ENCODE measurements at regions of chr3 and their contacts with region 1.

Region 1: GRCh38 chr3:177426878-177427495 is 229.7 kb upstream of the TBL1XR1 start:
- DNase-seq: peak; percentile 83
- H3K4me3 Mint-ChIP-seq: peak overlapping the region; percentile 55
- H3K27ac Mint-ChIP-seq: peak overlapping the region; percentile 91
- H3K4me1 Mint-ChIP-seq: peaks cover 42% of the 10 kb centered on the region
- H3K27me3 Mint-ChIP-seq: peaks cover 7% of the 10 kb centered on the region

Region 2: GRCh38 chr3:177197041-177197727 is 229.8 kb before region 1 on chr3 and contains the start of gene TBL1XR1:
- CTCF ChIA-PET with region 1: no interaction called
- POLR2A ChIA-PET with region 1: interaction called, 3 read pairs
- intact Hi-C with region 1: loop called (anchors 1 kb)
- DNase-seq: peak; percentile 89
- H3K4me3 Mint-ChIP-seq: peak within 1 kb of the TSS; percentile 90
- H3K27ac Mint-ChIP-seq: peak within 1 kb of the TSS; percentile 99
- H3K4me1 Mint-ChIP-seq: peaks cover 51% of the 10 kb centered on the region
- H3K27me3 Mint-ChIP-seq: no peaks in the 10 kb centered on the region
- total RNA-seq, gene TBL1XR1: 158 to 167 TPM

Region 3: GRCh38 chr3:177345049-177345972 is 81.7 kb before region 1 on chr3:
- CTCF ChIA-PET with region 1: no interaction called
- POLR2A ChIA-PET with region 1: interaction called, 4 read pairs
- intact Hi-C with region 1: loop called (anchors 1 kb)
- DNase-seq: peak; percentile 86
- H3K4me3 Mint-ChIP-seq: peak overlapping the region; percentile 20
- H3K27ac Mint-ChIP-seq: peak overlapping the region; percentile 90
- H3K4me1 Mint-ChIP-seq: peaks cover 40% of the 10 kb centered on the region
- H3K27me3 Mint-ChIP-seq: no peaks in the 10 kb centered on the region

Region 4: GRCh38 chr3:177538750-177539730 is 112.1 kb after region 1 on chr3:
- CTCF ChIA-PET with region 1: no interaction called
- POLR2A ChIA-PET with region 1: no interaction called
- intact Hi-C with region 1: loop called (anchors 5 kb)
- DNase-seq: no peak
- H3K4me3 Mint-ChIP-seq: peak overlapping the region; percentile 42
- H3K27ac Mint-ChIP-seq: peak overlapping the region; percentile 67
- H3K4me1 Mint-ChIP-seq: peaks cover 40% of the 10 kb centered on the region
- H3K27me3 Mint-ChIP-seq: no peaks in the 10 kb centered on the region

Region 5: GRCh38 chr3:177787279-177788041 is 360.5 kb after region 1 on chr3:
- CTCF ChIA-PET with region 1: no interaction called
- POLR2A ChIA-PET with region 1: no interaction called
- intact Hi-C with region 1: loop called (anchors 1 kb)
- DNase-seq: no peak
- H3K4me3 Mint-ChIP-seq: no peak overlapping the region
- H3K27ac Mint-ChIP-seq: no peak overlapping the region
- H3K4me1 Mint-ChIP-seq: peaks cover 16% of the 10 kb centered on the region
- H3K27me3 Mint-ChIP-seq: no peaks in the 10 kb centered on the region

Measured in activated CD4-positive, alpha-beta memory T cell treated with anti-CD3 and anti-CD28 coated beads for 36 hours (primary cell).